CD4-positive, alpha-beta T cell (primary cell): ENCODE measurements at regions of chr12 and their contacts with region 1.

Region 1: DNA sequence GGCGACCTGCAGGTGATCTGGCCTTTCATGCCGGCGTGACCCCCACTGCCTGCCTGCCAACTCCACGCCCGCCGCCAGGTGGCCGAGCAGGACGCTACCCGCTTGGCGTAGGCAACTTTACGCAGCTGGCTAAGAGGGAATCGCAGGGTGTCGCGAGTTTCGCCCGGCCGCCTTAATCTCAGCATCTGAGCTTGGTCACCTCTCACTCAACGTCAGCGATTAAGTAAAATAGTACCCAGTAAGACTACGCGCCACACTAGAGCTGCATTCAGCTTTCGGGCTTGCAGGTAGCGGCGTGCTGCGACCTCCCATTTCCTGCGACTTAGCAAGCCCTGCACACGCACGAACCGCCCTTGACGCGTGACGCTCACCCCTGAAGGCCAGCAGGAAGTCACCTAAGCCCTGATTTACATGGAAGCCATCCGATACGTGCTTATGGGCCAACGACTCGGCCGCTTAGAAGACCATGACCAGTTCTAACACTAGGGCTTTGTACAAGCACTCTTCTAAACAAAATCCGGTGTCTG is 33.2 kb downstream of the WBP11 start:
- DNase-seq: peak; percentile 72 to 96 (median 83)
- ATAC-seq: peak; percentile 50
- H3K4me3 ChIP-seq: peak overlapping the region; percentile 71
- H3K4me3 Mint-ChIP-seq: peak overlapping the region; percentile 97
- H3K27ac ChIP-seq: peak overlapping the region; percentile 95 to 99
- H3K27ac Mint-ChIP-seq: peak overlapping the region; percentile 100
- H3K4me1 ChIP-seq: peaks cover 40% of the 10 kb centered on the region
- H3K4me1 Mint-ChIP-seq: peaks cover 79% of the 10 kb centered on the region
- H3K27me3 ChIP-seq: no peaks in the 10 kb centered on the region
- H3K27me3 Mint-ChIP-seq: no peaks in the 10 kb centered on the region
- CTCF ChIP-seq: peak; percentile 81

Region 2: GRCh38 chr12:14365294-14366208 is 404.5 kb before region 1 on chr12 and contains the start of gene ATF7IP:
- CTCF ChIA-PET with region 1: no interaction called
- POLR2A ChIA-PET with region 1: interaction called, 89 read pairs
- intact Hi-C with region 1: loop called (anchors 2 to 10 kb)
- DNase-seq: peak; percentile 90 to 99 (median 95)
- ATAC-seq: peak; percentile 86
- H3K4me3 ChIP-seq: peak within 1 kb of the TSS; percentile 60
- H3K4me3 Mint-ChIP-seq: peak within 1 kb of the TSS; percentile 95
- H3K27ac ChIP-seq: peak within 1 kb of the TSS; percentile 89 to 93
- H3K27ac Mint-ChIP-seq: peak within 1 kb of the TSS; percentile 96
- H3K4me1 ChIP-seq: peaks cover 17% of the 10 kb centered on the region
- H3K4me1 Mint-ChIP-seq: peaks cover 51% of the 10 kb centered on the region
- H3K27me3 ChIP-seq: no peaks in the 10 kb centered on the region
- H3K27me3 Mint-ChIP-seq: no peaks in the 10 kb centered on the region
- CTCF ChIP-seq: peak; percentile 58
- total RNA-seq, gene ATF7IP: 134 to 143 TPM

Region 3: GRCh38 chr12:14417715-14418114 is 352.3 kb before region 1 on chr12:
- CTCF ChIA-PET with region 1: no interaction called
- POLR2A ChIA-PET with region 1: interaction called, 12 read pairs
- intact Hi-C with region 1: no loop called
- DNase-seq: peak; percentile 34 to 91 (median 62)
- ATAC-seq: peak; percentile 65
- H3K4me3 ChIP-seq: peak overlapping the region; percentile 33
- H3K4me3 Mint-ChIP-seq: peak overlapping the region; percentile 82
- H3K27ac ChIP-seq: peak overlapping the region; percentile 5 to 52
- H3K27ac Mint-ChIP-seq: peak overlapping the region; percentile 75
- H3K4me1 ChIP-seq: peaks cover 16% of the 10 kb centered on the region
- H3K4me1 Mint-ChIP-seq: peaks cover 62% of the 10 kb centered on the region
- H3K27me3 ChIP-seq: no peaks in the 10 kb centered on the region
- H3K27me3 Mint-ChIP-seq: no peaks in the 10 kb centered on the region
- CTCF ChIP-seq: no peak

Region 4: GRCh38 chr12:14567351-14568162 is 202.5 kb before region 1 on chr12 and contains the start of gene PLBD1:
- CTCF ChIA-PET with region 1: no interaction called
- POLR2A ChIA-PET with region 1: no interaction called
- intact Hi-C with region 1: no loop called
- DNase-seq: peak in 3 of 14 experiments; percentile 7 to 32 (median 29)
- ATAC-seq: no peak
- H3K4me3 ChIP-seq: peak within 1 kb of the TSS; percentile 29
- H3K4me3 Mint-ChIP-seq: no peak within 1 kb of the TSS
- H3K27ac ChIP-seq: no peak within 1 kb of the TSS
- H3K27ac Mint-ChIP-seq: no peak within 1 kb of the TSS
- H3K4me1 ChIP-seq: peaks cover 5% of the 10 kb centered on the region
- H3K4me1 Mint-ChIP-seq: no peaks in the 10 kb centered on the region
- H3K27me3 ChIP-seq: peaks cover 28 to 30% of the 10 kb centered on the region in 2 experiments
- H3K27me3 Mint-ChIP-seq: peaks cover 72% of the 10 kb centered on the region
- CTCF ChIP-seq: no peak
- total RNA-seq, gene PLBD1: 0.95 to 1.3 TPM

Region 5: DNA sequence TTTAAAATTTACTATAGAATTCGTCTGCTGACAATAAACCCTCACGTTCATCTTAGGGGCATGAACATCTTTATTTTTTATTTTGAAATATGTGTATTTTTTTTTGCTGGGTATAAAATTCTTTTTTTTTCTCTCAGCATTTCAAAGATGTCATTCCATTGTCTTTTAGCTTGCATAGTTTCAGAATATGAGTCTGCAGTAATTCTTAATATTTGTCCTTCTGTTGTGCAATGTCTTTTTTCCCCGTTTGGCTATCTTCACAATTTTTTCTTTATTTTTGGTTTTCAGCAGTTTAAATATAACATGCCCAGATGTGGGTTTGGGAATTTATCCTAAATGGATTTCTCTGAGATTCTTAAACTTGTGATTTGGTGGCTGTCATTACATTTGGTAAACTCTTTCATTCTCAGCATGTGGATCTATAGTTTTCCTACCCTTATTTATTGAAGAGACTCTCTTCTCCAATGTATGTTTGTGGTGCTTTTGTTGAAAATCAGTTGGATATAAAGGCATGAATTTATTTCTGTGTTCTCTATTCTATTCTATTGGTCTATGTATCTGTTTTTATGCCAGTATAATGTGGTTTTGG is 164.5 kb before region 1 on chr12:
- CTCF ChIA-PET with region 1: no interaction called
- POLR2A ChIA-PET with region 1: no interaction called
- intact Hi-C with region 1: no loop called
- DNase-seq: no peak
- ATAC-seq: no peak
- H3K4me3 ChIP-seq: no peak overlapping the region
- H3K4me3 Mint-ChIP-seq: no peak overlapping the region
- H3K27ac ChIP-seq: no peak overlapping the region
- H3K27ac Mint-ChIP-seq: no peak overlapping the region
- H3K4me1 ChIP-seq: no peaks in the 10 kb centered on the region
- H3K4me1 Mint-ChIP-seq: no peaks in the 10 kb centered on the region
- H3K27me3 ChIP-seq: no peaks in the 10 kb centered on the region
- H3K27me3 Mint-ChIP-seq: peaks cover 19% of the 10 kb centered on the region
- CTCF ChIP-seq: no peak

Region 6: DNA sequence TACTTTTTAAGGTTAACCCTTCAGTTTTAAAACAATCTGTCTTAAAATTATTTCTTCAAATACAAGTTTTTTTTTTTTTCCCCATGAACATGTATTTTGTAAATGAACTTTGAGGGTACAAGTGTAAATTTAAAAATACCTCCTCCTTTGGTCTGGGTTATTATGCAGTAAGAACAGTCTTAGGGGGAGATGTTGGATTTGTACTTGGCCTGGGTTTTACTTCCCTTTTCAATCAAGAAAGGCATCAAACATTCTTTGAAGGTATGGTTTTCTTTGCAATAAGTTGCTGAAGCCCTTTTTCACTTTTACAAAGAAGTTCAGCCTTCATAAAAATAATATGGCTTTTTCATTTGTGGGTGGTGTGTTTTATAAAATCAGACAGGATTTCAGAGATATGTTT is 12.7 kb after region 1 on chr12:
- CTCF ChIA-PET with region 1: interaction called, 8 read pairs
- POLR2A ChIA-PET with region 1: interaction called, 114 read pairs
- intact Hi-C with region 1: no loop called
- DNase-seq: no peak
- ATAC-seq: no peak
- H3K4me3 ChIP-seq: no peak overlapping the region
- H3K4me3 Mint-ChIP-seq: no peak overlapping the region
- H3K27ac ChIP-seq: no peak overlapping the region
- H3K27ac Mint-ChIP-seq: no peak overlapping the region
- H3K4me1 ChIP-seq: no peaks in the 10 kb centered on the region
- H3K4me1 Mint-ChIP-seq: peaks cover 7% of the 10 kb centered on the region
- H3K27me3 ChIP-seq: no peaks in the 10 kb centered on the region
- H3K27me3 Mint-ChIP-seq: no peaks in the 10 kb centered on the region
- CTCF ChIP-seq: no peak

Region 7: GRCh38 chr12:14948672-14949071 is 178.6 kb after region 1 on chr12:
- CTCF ChIA-PET with region 1: interaction called, 4 read pairs
- POLR2A ChIA-PET with region 1: interaction called, 14 read pairs
- intact Hi-C with region 1: loop called in 1 of 2 experiments (anchors 5 kb)
- DNase-seq: peak in 9 of 14 experiments; percentile 29 to 92 (median 57)
- ATAC-seq: peak; percentile 85
- H3K4me3 ChIP-seq: peak overlapping the region; percentile 34
- H3K4me3 Mint-ChIP-seq: peak overlapping the region; percentile 81
- H3K27ac ChIP-seq: peak overlapping the region; percentile 90 to 95
- H3K27ac Mint-ChIP-seq: peak overlapping the region; percentile 94
- H3K4me1 ChIP-seq: peaks cover 66% of the 10 kb centered on the region
- H3K4me1 Mint-ChIP-seq: peaks cover 92% of the 10 kb centered on the region
- H3K27me3 ChIP-seq: no peaks in the 10 kb centered on the region
- H3K27me3 Mint-ChIP-seq: no peaks in the 10 kb centered on the region
- CTCF ChIP-seq: no peak

Region 8: DNA sequence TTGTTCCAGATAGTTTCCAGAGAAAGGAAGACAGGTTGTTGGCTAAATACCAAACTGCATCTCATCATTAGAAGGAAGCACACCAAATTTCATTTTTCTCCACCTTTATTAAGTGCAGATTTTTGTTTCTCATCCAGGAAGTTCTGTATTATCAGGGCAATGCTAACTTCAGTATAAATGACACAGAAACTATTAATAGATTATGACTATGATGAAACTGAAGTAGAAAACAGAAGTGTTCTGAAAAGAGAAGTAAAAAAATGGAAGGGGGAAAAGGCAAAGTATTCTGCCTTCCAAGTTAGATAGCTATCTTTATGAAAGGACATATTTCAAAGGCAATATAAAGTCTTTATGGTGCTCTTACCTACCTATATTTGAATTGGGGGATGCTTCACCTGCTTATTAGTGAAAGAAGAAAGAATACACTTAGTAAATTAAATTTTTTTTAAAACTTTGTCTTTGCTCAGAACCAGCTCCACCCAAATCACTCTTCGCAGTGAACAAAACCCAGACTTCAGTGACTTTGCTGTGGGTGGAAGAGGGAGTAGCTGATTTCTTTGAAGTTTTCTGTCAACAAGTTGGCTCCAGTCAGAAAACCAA is 776.2 kb after region 1 on chr12:
- CTCF ChIA-PET with region 1: no interaction called
- POLR2A ChIA-PET with region 1: interaction called, 30 read pairs
- intact Hi-C with region 1: no loop called
- DNase-seq: peak in 10 of 14 experiments; percentile 21 to 81 (median 45)
- ATAC-seq: peak; percentile 93
- H3K4me3 ChIP-seq: peak overlapping the region; percentile 19
- H3K4me3 Mint-ChIP-seq: peak overlapping the region; percentile 83
- H3K27ac ChIP-seq: peak overlapping the region; percentile 59 to 67
- H3K27ac Mint-ChIP-seq: peak overlapping the region; percentile 100
- H3K4me1 ChIP-seq: peaks cover 22% of the 10 kb centered on the region
- H3K4me1 Mint-ChIP-seq: peaks cover 85% of the 10 kb centered on the region
- H3K27me3 ChIP-seq: no peaks in the 10 kb centered on the region
- H3K27me3 Mint-ChIP-seq: no peaks in the 10 kb centered on the region
- CTCF ChIP-seq: no peak